ENCODE measurements at regions of chr17 and their contacts with region 1.

Region 1: DNA sequence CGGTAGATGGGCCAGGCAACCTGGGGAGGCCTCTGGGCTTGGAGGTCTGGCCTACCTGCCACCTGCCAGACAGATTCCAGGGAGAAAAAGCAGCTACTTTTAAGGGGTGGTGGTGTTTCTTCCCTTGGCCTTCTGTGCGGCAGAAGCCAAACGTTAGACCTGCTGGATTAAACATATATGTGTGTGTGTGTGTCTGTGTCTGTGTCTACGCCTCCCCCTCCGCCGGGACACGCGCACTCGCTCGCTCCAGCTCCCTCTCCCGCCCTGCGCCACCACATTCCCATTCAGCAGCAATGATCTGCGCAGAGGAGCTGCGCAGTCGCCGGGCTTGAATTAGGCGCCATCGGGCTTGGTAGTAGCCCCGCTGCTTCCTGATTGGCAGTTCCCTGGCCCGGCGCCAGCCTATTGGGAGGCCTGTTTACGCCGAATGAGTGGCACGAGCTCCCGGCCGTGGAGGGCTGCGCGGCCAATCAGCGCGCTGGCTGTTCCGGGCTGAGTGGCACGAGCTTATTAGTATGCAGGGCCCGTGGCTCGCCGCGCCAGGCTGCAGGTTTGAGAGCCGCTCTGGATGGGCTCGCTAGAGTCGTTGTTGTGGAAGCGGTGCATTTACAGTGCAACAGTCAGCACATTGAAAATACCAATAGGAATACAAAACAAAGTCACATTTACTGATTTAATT is at the start of gene BAHCC1:
- DNase-seq: peak; percentile 100
- ATAC-seq: peak; percentile 74
- H3K4me3 ChIP-seq: peak within 1 kb of the TSS; percentile 82 to 83
- H3K27ac ChIP-seq: peak within 1 kb of the TSS; percentile 99
- H3K4me1 ChIP-seq: peaks cover 25 to 46% of the 10 kb centered on the region in 2 experiments
- H3K27me3 ChIP-seq: no peaks in the 10 kb centered on the region
- CTCF ChIP-seq: no peak
- POLR2A ChIP-seq: peak; percentile 99
- RAD21 ChIP-seq: no peak
- total RNA-seq, gene BAHCC1: 45.2 TPM

Region 2: DNA sequence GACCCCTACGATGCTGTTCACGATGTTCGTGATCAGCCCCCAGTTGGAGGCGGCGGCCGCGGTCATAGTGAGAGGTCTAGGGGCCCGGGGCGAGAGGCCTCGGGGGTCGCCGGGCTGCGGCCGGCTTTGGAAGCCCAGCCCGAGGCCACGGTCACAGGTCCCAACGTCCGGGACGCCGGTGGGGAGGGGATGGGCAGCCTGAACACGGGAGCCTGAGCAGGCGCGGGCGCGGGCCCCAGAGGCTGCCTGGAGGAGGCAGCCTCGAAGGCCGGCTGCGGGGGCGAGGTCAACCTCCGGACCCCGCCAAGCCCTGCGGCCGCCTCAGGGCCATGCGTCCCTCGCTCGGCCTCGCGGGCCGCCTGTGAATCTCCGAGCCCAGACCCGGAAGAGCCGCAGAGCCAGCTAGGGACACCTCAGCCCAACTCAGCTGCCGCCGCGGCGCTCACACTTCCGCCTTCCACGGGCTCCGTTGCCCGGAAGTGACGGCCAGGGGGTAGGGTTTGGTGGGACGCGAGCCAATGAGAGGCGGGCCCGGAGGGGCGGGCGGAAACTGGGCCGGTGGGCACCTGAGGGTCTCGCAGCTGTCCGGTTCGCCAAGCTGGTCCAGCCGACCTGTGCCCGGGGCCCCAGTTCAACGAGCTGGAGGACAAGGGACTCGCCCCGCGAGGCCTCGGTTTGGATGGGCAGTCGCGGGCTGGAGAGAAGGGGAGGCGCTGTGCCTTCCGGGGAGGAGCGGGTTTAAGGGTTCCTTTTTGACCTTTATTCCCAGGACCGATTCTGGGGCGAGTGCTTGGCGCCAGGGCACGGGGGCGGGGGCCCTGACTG is 100.0 kb before region 1 on chr17 and contains the start of gene SLC38A10:
- CTCF ChIA-PET with region 1: interaction called, 15 read pairs
- POLR2A ChIA-PET with region 1: interaction called, 5 read pairs
- RAD21 ChIA-PET with region 1: interaction called, 7 to 10 read pairs
- intact Hi-C with region 1: loop called (anchors 2 kb)
- DNase-seq: peak; percentile 73
- ATAC-seq: peak; percentile 81
- H3K4me3 ChIP-seq: peak within 1 kb of the TSS; percentile 78 to 82
- H3K27ac ChIP-seq: peak within 1 kb of the TSS; percentile 98
- H3K4me1 ChIP-seq: peaks cover 17 to 37% of the 10 kb centered on the region in 2 experiments; a peak in 3 of 4 replicates
- H3K27me3 ChIP-seq: no peaks in the 10 kb centered on the region
- CTCF ChIP-seq: no peak; a peak in 1 of 6 replicates
- POLR2A ChIP-seq: peak; percentile 87
- RAD21 ChIP-seq: no peak
- total RNA-seq, gene SLC38A10: 109 TPM

Region 3: DNA sequence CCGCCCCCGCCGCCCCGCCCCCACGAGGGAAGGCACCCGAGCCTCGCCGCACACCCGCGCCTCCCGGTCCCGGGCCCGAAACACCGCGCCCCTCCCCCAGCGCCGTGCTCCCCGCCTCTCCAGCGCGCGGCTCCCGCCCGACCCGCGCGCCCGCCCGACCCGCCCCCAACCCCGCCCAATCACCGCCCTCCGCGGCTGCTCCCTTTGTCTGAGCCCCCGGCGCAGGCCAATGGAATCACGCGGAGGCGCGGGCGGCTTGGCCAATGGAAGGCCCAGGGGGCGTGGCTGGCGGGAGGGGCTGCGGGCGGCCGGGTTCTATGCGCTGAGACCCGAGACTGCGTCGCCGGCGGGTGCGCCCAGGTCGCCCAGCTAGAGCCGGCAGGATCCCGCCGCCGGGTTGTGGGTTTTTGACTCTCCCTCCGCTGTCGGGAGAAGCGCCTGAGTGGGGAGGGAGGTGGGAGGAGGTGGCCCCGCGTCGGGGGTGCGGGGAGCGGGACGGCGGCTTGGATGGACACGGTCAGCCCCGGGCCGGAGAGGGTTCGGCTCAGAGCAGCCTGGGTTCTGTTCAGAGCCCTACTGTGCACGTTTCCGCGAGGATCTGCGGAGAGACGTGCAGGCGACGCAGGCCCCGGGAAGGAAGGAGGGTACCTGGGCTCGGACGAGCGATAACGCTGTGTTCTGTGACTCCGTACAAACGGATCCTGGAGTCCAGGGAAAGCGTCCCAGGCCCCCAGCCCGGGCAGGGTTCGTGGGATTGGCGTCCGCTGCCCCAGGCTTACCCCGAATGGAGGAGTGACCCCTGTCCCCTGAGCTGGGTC is 48.8 kb before region 1 on chr17:
- CTCF ChIA-PET with region 1: no interaction called
- POLR2A ChIA-PET with region 1: interaction called, 15 read pairs
- RAD21 ChIA-PET with region 1: no interaction called
- intact Hi-C with region 1: loop called (anchors 2 kb)
- DNase-seq: peak; percentile 93
- ATAC-seq: peak; percentile 78
- H3K4me3 ChIP-seq: peak overlapping the region; percentile 77 to 100
- H3K27ac ChIP-seq: peak overlapping the region; percentile 67
- H3K4me1 ChIP-seq: peaks cover 38 to 64% of the 10 kb centered on the region in 2 experiments
- H3K27me3 ChIP-seq: no peaks in the 10 kb centered on the region
- CTCF ChIP-seq: no peak
- POLR2A ChIP-seq: peak; percentile 45
- RAD21 ChIP-seq: no peak

Region 4: DNA sequence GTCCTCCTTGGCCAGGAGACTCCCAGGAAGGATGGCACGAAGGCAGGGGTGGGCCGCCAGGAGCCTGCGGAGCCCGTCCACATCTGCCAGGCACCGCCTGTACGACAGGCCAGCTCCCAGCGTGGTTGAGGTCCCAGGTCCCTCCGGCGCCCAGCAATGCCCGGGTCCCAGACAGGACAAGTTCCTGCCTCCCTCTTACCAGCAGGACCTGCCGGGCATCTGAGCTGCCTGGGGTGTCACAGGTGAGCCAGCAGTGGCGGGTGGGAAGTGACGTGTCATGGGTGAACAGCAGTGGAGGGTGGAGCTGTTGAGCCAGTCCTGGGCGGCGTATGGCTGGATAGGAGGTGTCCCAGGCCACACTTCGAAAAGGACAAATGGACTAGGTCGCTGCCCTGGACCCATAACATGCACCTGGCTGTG is 15.5 kb before region 1 on chr17:
- CTCF ChIA-PET with region 1: interaction called, 3 read pairs
- POLR2A ChIA-PET with region 1: interaction called, 15 read pairs
- RAD21 ChIA-PET with region 1: interaction called in 1 of 2 experiments, 5 read pairs
- intact Hi-C with region 1: no loop called
- DNase-seq: peak; percentile 81
- ATAC-seq: peak; percentile 98
- H3K4me3 ChIP-seq: peak overlapping the region; percentile 47 to 62
- H3K27ac ChIP-seq: peak overlapping the region; percentile 56
- H3K4me1 ChIP-seq: peaks cover 10 to 19% of the 10 kb centered on the region in 2 experiments
- H3K27me3 ChIP-seq: no peaks in the 10 kb centered on the region
- CTCF ChIP-seq: peak in 1 of 3 experiments; percentile 10; a peak in 1 of 6 replicates
- POLR2A ChIP-seq: peak; percentile 78
- RAD21 ChIP-seq: no peak

Region 5: GRCh38 chr17:81428948-81429774 is 34.1 kb after region 1 on chr17:
- CTCF ChIA-PET with region 1: interaction called, 3 read pairs
- POLR2A ChIA-PET with region 1: interaction called, 6 read pairs
- RAD21 ChIA-PET with region 1: interaction called, 3 to 11 read pairs
- intact Hi-C with region 1: no loop called
- DNase-seq: no peak
- ATAC-seq: peak; percentile 76
- H3K4me3 ChIP-seq: peak overlapping the region in 1 of 2 experiments; percentile 38; a peak in 1 of 4 replicates
- H3K27ac ChIP-seq: no peak overlapping the region; the same call in 1 of the 2 replicates
- H3K4me1 ChIP-seq: peaks cover 21 to 45% of the 10 kb centered on the region in 2 experiments
- H3K27me3 ChIP-seq: no peaks in the 10 kb centered on the region
- CTCF ChIP-seq: no peak
- POLR2A ChIP-seq: no peak
- RAD21 ChIP-seq: no peak

Region 6: GRCh38 chr17:81512560-81513371 is 117.7 kb after region 1 on chr17 and contains the start of gene ACTG1:
- CTCF ChIA-PET with region 1: no interaction called
- POLR2A ChIA-PET with region 1: interaction called, 12 read pairs
- RAD21 ChIA-PET with region 1: no interaction called
- intact Hi-C with region 1: no loop called
- DNase-seq: peak; percentile 80
- ATAC-seq: peak; percentile 46
- H3K4me3 ChIP-seq: peak within 1 kb of the TSS; percentile 90 to 96
- H3K27ac ChIP-seq: peak within 1 kb of the TSS; percentile 100
- H3K4me1 ChIP-seq: peaks cover 23 to 77% of the 10 kb centered on the region in 2 experiments
- H3K27me3 ChIP-seq: no peaks in the 10 kb centered on the region
- CTCF ChIP-seq: no peak
- POLR2A ChIP-seq: peak; percentile 99
- RAD21 ChIP-seq: no peak
- total RNA-seq, gene ACTG1: 6,223 TPM

Measured in HCT116 (cell line).